Transverse colon (tissue), 4 donors: ENCODE measurements at regions of chr17 and their contacts with region 1.

Region 1: DNA sequence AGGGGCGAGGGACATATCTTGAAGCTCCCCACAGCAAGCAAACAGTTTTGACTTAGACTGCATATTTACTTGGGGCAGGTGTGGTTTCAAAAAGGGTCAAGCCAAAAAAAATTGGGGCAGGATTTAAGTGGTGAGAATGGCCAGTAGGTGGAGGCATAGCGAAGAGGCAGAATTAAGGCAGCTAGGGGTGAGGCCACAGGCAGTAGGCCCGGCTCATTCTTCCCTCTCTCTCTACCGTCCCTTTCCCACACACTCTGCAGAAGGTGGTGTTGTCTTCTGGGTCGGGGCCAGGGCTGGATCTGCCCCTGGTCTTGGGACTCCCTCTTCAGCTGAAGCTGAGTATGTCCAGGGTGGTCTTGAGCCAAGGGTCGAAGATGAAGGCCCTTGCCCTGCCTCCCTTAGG is 2.6 kb downstream of the SHBG start:
- DNase-seq: peak; percentile 40
- H3K4me3 ChIP-seq: no peak overlapping the region
- H3K27ac ChIP-seq: no peak overlapping the region
- H3K4me1 ChIP-seq: peaks cover 5 to 6% (median 5%) of the 10 kb centered on the region in 4 donors
- H3K27me3 ChIP-seq: no peaks in the 10 kb centered on the region
- CTCF ChIP-seq: peak; percentile 37 to 65 (median 50)
- EP300 ChIP-seq: no peak
- POLR2A ChIP-seq: no peak

Region 2: GRCh38 chr17:7687908-7688807 is 55.7 kb after region 1 on chr17 and contains the start of gene WRAP53:
- in situ Hi-C with region 1: loop called in 2 of 4 experiments (anchors 5 to 10 kb)
- intact Hi-C with region 1: loop called (anchors 5 kb)
- DNase-seq: peak; percentile 97
- H3K4me3 ChIP-seq: peak within 1 kb of the TSS; percentile 62 to 93 (median 82)
- H3K27ac ChIP-seq: peak within 1 kb of the TSS; percentile 95 to 99 (median 98)
- H3K4me1 ChIP-seq: peaks cover 15 to 38% (median 25%) of the 10 kb centered on the region in 4 donors
- H3K27me3 ChIP-seq: no peaks in the 10 kb centered on the region
- CTCF ChIP-seq: peak; percentile 98 to 100 (median 99)
- EP300 ChIP-seq: no peak
- POLR2A ChIP-seq: no peak
- total RNA-seq, gene WRAP53: 3.7 to 33.0 (median 6.0) TPM